ACHN (cell line): ENCODE measurements at regions of chr2 and their contacts with region 1.

Region 1: DNA sequence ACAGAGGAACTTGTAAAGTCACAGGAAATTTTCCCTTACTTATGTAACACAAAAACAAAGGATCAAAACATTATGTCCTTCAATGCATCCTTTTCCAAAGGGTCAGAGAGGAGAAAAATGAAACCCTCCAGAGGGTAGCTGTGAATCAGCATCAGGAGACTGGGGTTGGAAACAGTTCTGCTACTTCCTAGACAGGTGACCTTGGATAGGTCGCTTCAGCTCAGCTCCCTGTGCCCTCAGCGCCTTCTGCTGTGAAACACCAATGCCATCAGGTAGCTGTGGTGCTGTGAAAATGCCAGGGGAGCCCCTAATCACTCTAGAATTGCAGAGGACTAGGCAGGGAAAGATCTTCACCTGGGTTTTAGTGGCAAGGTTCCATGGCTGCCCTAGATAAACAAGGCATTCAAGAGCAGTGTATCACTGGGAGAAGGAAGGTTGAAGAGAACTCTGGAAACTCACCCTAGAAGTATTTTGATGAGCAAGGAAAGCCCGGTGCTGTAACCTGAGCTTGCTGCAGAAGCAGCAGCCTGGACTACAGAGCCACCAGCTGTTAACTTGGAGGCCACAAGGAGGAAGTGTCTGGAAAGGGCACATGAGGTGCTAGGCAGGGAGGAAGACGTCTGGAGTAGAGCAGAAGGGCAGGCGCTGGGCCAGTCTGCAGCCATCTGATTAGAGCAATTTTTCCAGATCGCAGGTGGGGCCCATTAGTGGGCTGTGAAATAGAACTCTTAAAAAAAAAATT is 100.7 kb upstream of the MCFD2 start:
- DNase-seq: peak; percentile 73

Region 2: GRCh38 chr2:47174733-47175361 is 158.5 kb after region 1 on chr2:
- in situ Hi-C with region 1: loop called (anchors 25 kb)
- DNase-seq: peak; percentile 67

Region 3: DNA sequence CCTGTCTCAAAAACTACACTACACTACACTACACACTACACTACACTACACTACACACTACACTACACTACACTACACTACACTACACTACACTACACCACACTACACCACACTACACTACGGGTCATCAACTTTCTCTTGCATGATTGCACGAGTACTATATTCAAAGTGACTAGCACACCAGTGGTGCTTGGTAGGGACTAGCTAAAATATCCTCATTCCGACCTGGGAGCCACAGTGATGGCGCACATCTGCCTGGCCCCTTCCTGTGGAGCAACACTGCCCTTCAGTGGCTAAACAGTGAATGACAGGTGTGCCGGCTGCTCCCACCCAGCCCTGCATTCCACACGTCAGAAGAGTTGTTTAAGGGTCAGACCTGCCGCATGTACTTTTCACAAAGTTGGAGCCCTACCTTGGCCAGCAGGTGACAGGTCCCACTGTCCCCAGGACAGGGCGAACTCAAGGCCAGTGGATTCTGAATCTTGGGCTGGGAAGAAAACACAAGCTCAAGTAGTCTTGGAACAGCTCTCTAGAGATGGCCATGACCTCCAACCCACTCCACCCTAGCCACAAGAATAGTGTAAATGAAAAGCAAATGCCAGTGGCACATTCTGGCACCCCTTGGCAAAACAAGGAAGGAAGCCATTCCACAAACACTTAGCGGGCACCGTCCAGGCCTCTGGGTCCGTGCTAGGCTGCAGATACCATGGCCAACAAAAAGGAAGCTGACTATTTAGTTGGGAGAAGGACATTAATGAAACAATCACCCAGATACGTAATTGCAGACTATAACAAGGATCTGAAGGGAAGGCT is 306.9 kb after region 1 on chr2:
- in situ Hi-C with region 1: loop called (anchors 25 kb)
- DNase-seq: peak; percentile 73